IMR-90 (cell line): ENCODE measurements at regions of chr2 and their contacts with region 1.

Region 1: DNA sequence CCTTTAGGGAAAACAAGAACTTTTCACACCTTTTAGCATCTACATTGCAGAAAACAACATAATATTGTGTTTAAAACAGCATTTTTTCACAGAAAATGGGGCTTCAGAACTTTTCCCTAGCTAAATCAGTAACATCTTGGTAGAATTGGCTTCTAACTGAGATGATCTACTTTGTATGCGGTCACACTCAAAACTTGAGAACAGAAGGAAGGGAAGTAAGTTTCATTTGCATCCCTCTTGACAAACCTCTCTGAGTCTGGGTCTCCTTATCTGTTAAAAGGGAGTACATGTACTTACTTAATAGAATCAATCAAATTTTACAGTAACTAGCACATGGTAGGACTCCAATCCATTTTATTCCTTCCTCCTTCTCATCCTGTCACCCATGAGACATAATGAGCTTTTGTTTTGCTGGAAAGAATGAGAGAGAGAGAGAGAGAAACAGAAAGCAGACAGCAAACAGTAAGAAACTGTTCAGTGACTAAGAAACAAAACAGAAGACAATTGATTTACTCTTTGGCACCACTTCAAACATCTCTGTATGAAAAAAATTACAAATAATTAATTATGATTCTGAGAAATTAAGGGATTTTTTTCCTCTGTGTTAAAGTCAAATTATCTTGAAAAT is 387.3 kb downstream of the SATB2 start:
- DNase-seq: no peak
- ATAC-seq: no peak
- H3K4me3 ChIP-seq: no peak overlapping the region
- H3K27ac ChIP-seq: no peak overlapping the region
- H3K4me1 ChIP-seq: no peaks in the 10 kb centered on the region
- H3K27me3 ChIP-seq: no peaks in the 10 kb centered on the region
- CTCF ChIP-seq: no peak
- POLR2A ChIP-seq: no peak
- RAD21 ChIP-seq: no peak

Region 2: GRCh38 chr2:198795419-198795818 is 275.0 kb before region 1 on chr2:
- CTCF ChIA-PET with region 1: no interaction called
- POLR2A ChIA-PET with region 1: no interaction called
- dilution Hi-C with region 1: no loop called
- in situ Hi-C with region 1: no loop called
- intact Hi-C with region 1: no loop called
- DNase-seq: no peak
- ATAC-seq: no peak
- H3K4me3 ChIP-seq: no peak overlapping the region
- H3K27ac ChIP-seq: no peak overlapping the region
- H3K4me1 ChIP-seq: no peaks in the 10 kb centered on the region
- H3K27me3 ChIP-seq: no peaks in the 10 kb centered on the region
- CTCF ChIP-seq: no peak
- POLR2A ChIP-seq: no peak
- RAD21 ChIP-seq: no peak

Region 3: GRCh38 chr2:198825534-198825933 is 244.9 kb before region 1 on chr2:
- CTCF ChIA-PET with region 1: no interaction called
- POLR2A ChIA-PET with region 1: no interaction called
- dilution Hi-C with region 1: no loop called
- in situ Hi-C with region 1: no loop called
- intact Hi-C with region 1: loop called (anchors 5 kb)
- DNase-seq: no peak
- ATAC-seq: no peak
- H3K4me3 ChIP-seq: no peak overlapping the region
- H3K27ac ChIP-seq: no peak overlapping the region
- H3K4me1 ChIP-seq: no peaks in the 10 kb centered on the region
- H3K27me3 ChIP-seq: no peaks in the 10 kb centered on the region
- CTCF ChIP-seq: no peak
- POLR2A ChIP-seq: no peak
- RAD21 ChIP-seq: no peak

Region 4: DNA sequence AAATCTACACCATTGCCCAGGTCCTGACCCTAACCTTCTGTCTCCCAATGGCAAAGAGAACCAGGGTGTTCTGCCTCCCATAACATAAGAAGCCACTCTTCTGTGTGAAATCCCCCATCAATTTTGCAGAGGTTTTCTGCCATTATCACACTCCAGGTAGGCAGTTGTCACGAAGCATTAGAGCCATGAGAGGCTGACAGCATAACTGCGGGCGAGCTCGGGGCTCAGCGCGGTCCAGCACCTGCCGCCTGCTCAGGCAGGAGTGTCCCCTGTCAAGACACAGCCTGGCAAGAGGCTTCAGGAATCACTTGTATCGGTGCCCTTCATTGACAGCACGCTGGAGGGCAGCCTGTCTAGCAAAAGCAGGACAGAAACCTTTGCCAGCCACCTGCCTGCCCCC is 136.1 kb after region 1 on chr2:
- CTCF ChIA-PET with region 1: no interaction called
- POLR2A ChIA-PET with region 1: no interaction called
- dilution Hi-C with region 1: no loop called
- in situ Hi-C with region 1: no loop called
- intact Hi-C with region 1: no loop called
- DNase-seq: no peak
- ATAC-seq: no peak
- H3K4me3 ChIP-seq: no peak overlapping the region
- H3K27ac ChIP-seq: no peak overlapping the region
- H3K4me1 ChIP-seq: no peaks in the 10 kb centered on the region
- H3K27me3 ChIP-seq: no peaks in the 10 kb centered on the region
- CTCF ChIP-seq: no peak
- POLR2A ChIP-seq: no peak
- RAD21 ChIP-seq: no peak